ENCODE measurements at regions of chr18 and their contacts with region 1.

Region 1: DNA sequence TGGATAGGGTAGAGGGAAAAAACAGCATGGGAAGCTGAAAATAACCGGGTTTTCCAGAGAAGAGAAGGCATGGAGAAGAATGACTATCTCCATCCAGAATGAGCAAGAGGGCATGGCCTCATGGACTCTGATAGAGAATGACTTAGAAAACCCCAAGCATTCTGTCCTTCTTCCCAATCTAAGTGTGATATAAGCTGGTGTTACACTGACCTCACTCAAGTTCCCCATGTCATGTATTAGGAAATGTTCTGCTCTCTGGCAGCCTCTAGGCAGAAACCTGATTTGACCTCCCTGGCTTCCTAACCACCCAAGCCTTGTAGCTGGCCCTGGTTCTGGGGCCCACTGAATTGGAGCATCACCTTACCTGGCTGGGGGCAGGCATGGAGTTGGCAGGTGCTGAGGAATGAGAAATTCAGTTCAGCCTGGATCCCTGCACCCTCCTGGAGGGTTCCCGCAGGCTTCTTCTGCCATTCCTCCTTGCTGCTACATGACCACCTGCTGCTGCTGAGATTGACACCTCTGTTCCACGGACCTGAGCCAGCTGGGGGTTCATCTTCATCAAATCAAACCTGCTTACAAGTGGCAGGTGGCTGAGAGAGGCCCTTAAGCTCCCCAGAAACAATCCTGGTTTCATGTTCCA is 5.2 kb upstream of the SIGLEC15 start:
- DNase-seq: no peak
- ATAC-seq: no peak
- H3K4me3 ChIP-seq: no peak overlapping the region
- H3K27ac ChIP-seq: no peak overlapping the region
- H3K4me1 ChIP-seq: peaks cover 0 to 1% (median 0%) of the 10 kb centered on the region in 12 donors
- H3K27me3 ChIP-seq: no peaks in the 10 kb centered on the region
- CTCF ChIP-seq: no peak
- POLR2A ChIP-seq: no peak

Region 2: GRCh38 chr18:45785134-45785533 is 35.1 kb before region 1 on chr18:
- intact Hi-C with region 1: loop called in 1 of 10 experiments (anchors 5 kb)
- DNase-seq: peak in 2 of 5 donors; percentile 30 to 32
- ATAC-seq: peak in 2 of 4 donors; percentile 44 to 51
- H3K4me3 ChIP-seq: no peak overlapping the region
- H3K27ac ChIP-seq: no peak overlapping the region
- H3K4me1 ChIP-seq: peaks cover 0 to 12% (median 4%) of the 10 kb centered on the region in 12 donors
- H3K27me3 ChIP-seq: no peaks in the 10 kb centered on the region
- CTCF ChIP-seq: no peak
- POLR2A ChIP-seq: no peak

Region 3: DNA sequence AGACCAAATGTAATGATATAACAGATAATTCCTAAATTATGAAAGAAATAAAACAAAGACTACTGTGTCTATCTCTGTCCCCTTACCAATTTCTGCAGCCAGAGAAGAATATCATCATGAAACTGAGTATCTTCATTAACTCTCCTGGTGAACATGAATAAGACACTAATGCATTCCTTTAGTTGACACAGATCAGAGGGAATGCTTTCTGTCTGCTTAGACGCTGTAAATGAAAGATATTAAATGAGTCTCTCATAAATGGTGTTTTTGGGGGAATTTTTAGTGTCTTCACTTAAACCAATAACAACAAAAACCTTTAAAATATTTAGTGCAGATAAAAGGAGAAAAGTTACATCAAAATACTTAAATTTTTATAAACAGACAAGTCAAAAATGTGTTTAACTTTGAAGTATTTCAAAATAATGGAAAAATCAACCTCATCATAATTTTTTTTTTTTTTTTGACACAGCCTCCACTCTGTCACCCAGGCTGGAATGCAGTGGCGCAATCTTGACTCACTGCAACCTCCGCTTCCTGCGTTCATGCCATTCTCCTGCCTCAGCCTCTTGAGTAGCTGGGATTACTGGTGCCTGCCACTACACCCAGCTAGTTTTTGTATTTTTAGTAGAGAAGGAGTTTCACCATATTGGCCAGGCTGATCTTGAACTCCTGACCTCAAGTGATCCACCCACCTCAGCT is 130.9 kb after region 1 on chr18:
- intact Hi-C with region 1: no loop called
- DNase-seq: peak in 1 of 5 donors; percentile 42
- ATAC-seq: no peak
- H3K4me3 ChIP-seq: no peak overlapping the region
- H3K27ac ChIP-seq: no peak overlapping the region
- H3K4me1 ChIP-seq: peaks cover 0 to 10% (median 0%) of the 10 kb centered on the region in 12 donors
- H3K27me3 ChIP-seq: no peaks in the 10 kb centered on the region
- CTCF ChIP-seq: no peak
- POLR2A ChIP-seq: no peak

Measured in heart left ventricle (tissue), 16 donors.